ENCODE measurements at regions of chr7 and their contacts with region 1.

Region 1: GRCh38 chr7:94923412-94923811 is 16.0 kb downstream of the PPP1R9A start:
- DNase-seq: no peak
- ATAC-seq: no peak
- H3K4me3 Mint-ChIP-seq: no peak overlapping the region
- H3K27ac Mint-ChIP-seq: no peak overlapping the region
- H3K4me1 Mint-ChIP-seq: no peaks in the 10 kb centered on the region
- H3K27me3 Mint-ChIP-seq: peaks cover 4% of the 10 kb centered on the region

Region 2: GRCh38 chr7:94856643-94857042 is 66.8 kb before region 1 on chr7:
- CTCF ChIA-PET with region 1: no interaction called
- POLR2A ChIA-PET with region 1: no interaction called
- intact Hi-C with region 1: loop called in 1 of 2 experiments (anchors 2 kb)
- DNase-seq: no peak
- ATAC-seq: no peak
- H3K4me3 Mint-ChIP-seq: no peak overlapping the region
- H3K27ac Mint-ChIP-seq: no peak overlapping the region
- H3K4me1 Mint-ChIP-seq: no peaks in the 10 kb centered on the region
- H3K27me3 Mint-ChIP-seq: peaks cover 2% of the 10 kb centered on the region